ENCODE measurements at regions of chr11 and their contacts with region 1.

Region 1: DNA sequence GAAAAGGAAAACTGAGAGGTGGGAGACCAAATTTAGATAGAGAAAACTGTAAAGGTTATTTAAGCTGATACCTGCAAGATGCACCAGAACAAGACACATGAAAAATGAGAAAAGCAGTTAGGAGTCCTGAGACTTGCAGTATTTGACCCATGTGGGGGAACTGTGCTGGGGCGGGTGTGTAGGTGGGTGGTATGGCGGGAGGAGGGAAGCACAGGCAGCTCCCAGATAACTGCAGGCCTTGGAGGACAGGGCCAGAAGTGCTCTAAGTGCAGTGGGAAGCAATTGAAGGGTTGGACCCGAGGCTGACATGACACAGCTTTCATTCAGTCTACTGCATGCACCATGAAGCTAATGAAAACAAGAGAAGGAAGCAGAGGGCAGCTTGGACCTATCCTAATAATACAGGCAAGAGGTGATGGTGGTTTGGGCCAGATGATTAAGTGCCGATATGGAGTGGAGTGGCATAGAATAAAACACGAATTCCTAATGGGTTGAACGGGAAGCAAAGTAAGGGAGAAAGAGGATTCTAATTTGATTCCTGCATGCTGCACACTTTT is 48.0 kb upstream of the ANO3 start:
- DNase-seq: no peak
- ATAC-seq: no peak
- H3K4me3 ChIP-seq: no peak overlapping the region
- H3K4me3 Mint-ChIP-seq: peak overlapping the region; percentile 12 to 74 (median 53)
- H3K27ac ChIP-seq: no peak overlapping the region
- H3K27ac Mint-ChIP-seq: peak overlapping the region in 2 of 9 donors; percentile 2 to 3
- H3K4me1 ChIP-seq: no peaks in the 10 kb centered on the region
- H3K4me1 Mint-ChIP-seq: peaks cover 4 to 11% (median 10%) of the 10 kb centered on the region in 7 donors
- H3K27me3 ChIP-seq: no peaks in the 10 kb centered on the region
- H3K27me3 Mint-ChIP-seq: peaks cover 5 to 16% (median 9%) of the 10 kb centered on the region in 5 donors

Region 2: GRCh38 chr11:26649884-26650283 is 366.0 kb after region 1 on chr11:
- CTCF ChIA-PET with region 1: no interaction called
- POLR2A ChIA-PET with region 1: no interaction called
- intact Hi-C with region 1: loop called in 1 of 2 experiments (anchors 2 kb)
- DNase-seq: peak in 1 of 9 donors; percentile 21
- ATAC-seq: no peak
- H3K4me3 ChIP-seq: no peak overlapping the region
- H3K4me3 Mint-ChIP-seq: no peak overlapping the region
- H3K27ac ChIP-seq: no peak overlapping the region
- H3K27ac Mint-ChIP-seq: no peak overlapping the region
- H3K4me1 ChIP-seq: no peaks in the 10 kb centered on the region
- H3K4me1 Mint-ChIP-seq: no peaks in the 10 kb centered on the region
- H3K27me3 ChIP-seq: no peaks in the 10 kb centered on the region
- H3K27me3 Mint-ChIP-seq: no peaks in the 10 kb centered on the region

Measured in naive thymus-derived CD4-positive, alpha-beta T cell (primary cell).